ENCODE measurements at regions of chr13 and their contacts with region 1.

Region 1: GRCh38 chr13:25286969-25287961 is at the start of gene MTMR6:
- DNase-seq: peak; percentile 92 to 96 (median 94)
- H3K4me3 ChIP-seq: peak within 1 kb of the TSS; percentile 91 to 92
- H3K4me3 Mint-ChIP-seq: peak within 1 kb of the TSS; percentile 94 to 100 (median 98)
- H3K27ac ChIP-seq: peak within 1 kb of the TSS; percentile 100
- H3K27ac Mint-ChIP-seq: peak within 1 kb of the TSS; percentile 97 to 100 (median 98)
- H3K4me1 ChIP-seq: peaks cover 40% of the 10 kb centered on the region
- H3K4me1 Mint-ChIP-seq: peaks cover 36 to 58% (median 46%) of the 10 kb centered on the region in 4 donors
- H3K27me3 ChIP-seq: no peaks in the 10 kb centered on the region
- H3K27me3 Mint-ChIP-seq: peaks cover 4 to 8% of the 10 kb centered on the region in 2 donors
- total RNA-seq, gene MTMR6: 18.9 to 19.1 TPM

Region 2: GRCh38 chr13:24763596-24764275 is 523.5 kb before region 1 on chr13 and contains the start of gene RNF17:
- CTCF ChIA-PET with region 1: no interaction called
- POLR2A ChIA-PET with region 1: no interaction called
- intact Hi-C with region 1: no loop called
- DNase-seq: no peak
- H3K4me3 ChIP-seq: no peak within 1 kb of the TSS
- H3K4me3 Mint-ChIP-seq: no peak within 1 kb of the TSS
- H3K27ac ChIP-seq: no peak within 1 kb of the TSS
- H3K27ac Mint-ChIP-seq: no peak within 1 kb of the TSS
- H3K4me1 ChIP-seq: no peaks in the 10 kb centered on the region
- H3K4me1 Mint-ChIP-seq: no peaks in the 10 kb centered on the region
- H3K27me3 ChIP-seq: no peaks in the 10 kb centered on the region
- H3K27me3 Mint-ChIP-seq: peaks cover 2 to 6% of the 10 kb centered on the region in 2 donors
- total RNA-seq, gene RNF17: not detected

Region 3: DNA sequence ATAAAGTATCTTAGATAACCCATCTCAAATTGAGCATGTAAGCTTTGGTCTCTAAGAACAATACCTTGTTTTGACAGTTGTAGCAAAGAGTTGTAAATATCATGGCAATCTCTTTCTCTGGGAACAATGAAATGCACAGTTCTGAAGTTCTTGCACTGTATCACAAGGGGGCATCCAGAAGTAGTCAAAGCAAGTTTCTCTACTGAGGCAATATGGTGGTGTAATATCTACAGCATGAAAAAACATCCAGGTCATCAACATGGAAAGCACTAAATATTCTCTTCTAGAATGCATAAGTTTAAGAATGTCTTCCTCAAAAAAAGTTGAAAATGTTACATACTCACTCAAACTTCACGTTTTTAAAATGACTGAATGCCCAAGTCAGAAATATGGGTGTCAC is 19.6 kb before region 1 on chr13:
- CTCF ChIA-PET with region 1: interaction called, 16 read pairs
- POLR2A ChIA-PET with region 1: interaction called, 5 read pairs
- intact Hi-C with region 1: loop called (anchors 1 kb)
- DNase-seq: peak in 3 of 5 donors; percentile 11 to 21 (median 19)
- H3K4me3 ChIP-seq: no peak overlapping the region
- H3K4me3 Mint-ChIP-seq: no peak overlapping the region
- H3K27ac ChIP-seq: no peak overlapping the region
- H3K27ac Mint-ChIP-seq: peak overlapping the region in 5 of 7 donors; percentile 0 to 51 (median 19)
- H3K4me1 ChIP-seq: no peaks in the 10 kb centered on the region
- H3K4me1 Mint-ChIP-seq: peaks cover 0 to 15% (median 10%) of the 10 kb centered on the region in 4 donors
- H3K27me3 ChIP-seq: no peaks in the 10 kb centered on the region
- H3K27me3 Mint-ChIP-seq: no peaks in the 10 kb centered on the region